ENCODE measurements at regions of chrX and their contacts with region 1.

Region 1: DNA sequence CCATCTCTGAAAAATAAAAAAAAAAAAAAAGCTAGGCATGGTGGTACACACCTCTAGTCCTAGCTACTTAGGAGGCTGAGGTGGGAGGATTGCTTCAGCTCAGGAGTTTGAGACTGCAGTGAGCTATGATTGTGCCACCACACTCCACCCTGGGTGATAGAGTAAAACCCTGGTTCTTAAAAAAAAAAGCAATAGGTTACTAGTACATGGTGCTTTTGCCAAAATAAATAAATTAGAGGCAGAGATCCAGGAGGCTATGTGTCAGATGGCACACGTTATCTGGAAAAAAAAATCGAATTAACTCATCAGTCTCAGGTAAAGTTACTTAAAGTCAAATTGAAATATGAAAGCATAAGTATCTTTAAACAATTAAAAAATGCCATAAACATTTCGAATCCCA is 94.3 kb downstream of the VCX3A start:
- DNase-seq: no peak
- H3K4me3 ChIP-seq: no peak overlapping the region
- H3K27ac ChIP-seq: no peak overlapping the region
- H3K4me1 ChIP-seq: no peaks in the 10 kb centered on the region
- H3K27me3 ChIP-seq: no peaks in the 10 kb centered on the region
- CTCF ChIP-seq: no peak
- POLR2A ChIP-seq: no peak

Region 2: GRCh38 chrX:5290635-5291034 is 1150.0 kb before region 1 on chrX:
- intact Hi-C with region 1: loop called (anchors 5 kb)
- DNase-seq: no peak
- H3K4me3 ChIP-seq: no peak overlapping the region
- H3K27ac ChIP-seq: no peak overlapping the region
- H3K4me1 ChIP-seq: no peaks in the 10 kb centered on the region
- H3K27me3 ChIP-seq: no peaks in the 10 kb centered on the region
- CTCF ChIP-seq: no peak
- POLR2A ChIP-seq: no peak